K562 (cell line): ENCODE measurements at regions of chr1 and their contacts with region 1.

Region 1: DNA sequence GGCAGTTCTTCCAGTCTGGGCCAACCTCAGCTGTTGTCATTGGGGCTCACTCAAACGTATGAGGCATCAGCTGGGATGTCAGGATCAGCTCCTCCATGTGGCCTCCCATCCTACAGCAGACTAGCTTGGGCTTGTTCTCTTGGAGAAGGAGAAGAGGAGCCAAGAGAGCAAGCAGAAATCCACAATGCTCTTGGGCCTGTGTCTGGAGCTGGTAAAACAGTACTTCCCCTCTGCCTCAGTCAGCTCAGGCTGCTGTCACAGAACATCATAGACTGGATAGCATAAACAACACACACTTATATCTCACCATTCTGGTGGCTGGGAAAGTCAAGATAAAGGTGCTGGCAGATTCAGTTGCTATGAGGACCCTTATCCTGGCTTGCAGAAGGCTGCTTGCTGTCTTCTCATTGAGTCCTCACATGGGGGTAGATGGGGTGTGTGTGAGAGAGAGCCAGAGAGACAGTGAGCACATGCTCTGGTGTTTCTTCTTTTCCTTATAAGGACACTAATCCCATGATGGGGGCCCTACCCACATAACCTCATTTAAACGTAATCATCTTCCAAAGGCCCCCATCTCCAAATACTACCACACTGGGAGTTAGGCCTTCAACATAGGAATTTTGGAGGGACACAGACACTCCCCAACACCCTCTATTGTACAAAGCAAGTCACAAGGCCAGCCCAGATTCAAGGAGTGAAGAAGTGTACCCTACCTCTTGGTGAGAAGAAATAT is 16.3 kb upstream of the DNAJC6 start:
- DNase-seq: peak; percentile 68 to 98 (median 80)
- ATAC-seq: peak; percentile 95
- H3K4me3 ChIP-seq: no peak overlapping the region
- H3K27ac ChIP-seq: peak overlapping the region; percentile 96
- H3K4me1 ChIP-seq: peaks cover 28 to 52% of the 10 kb centered on the region in 2 experiments
- H3K27me3 ChIP-seq: no peaks in the 10 kb centered on the region
- CTCF ChIP-seq: no peak
- EP300 ChIP-seq: peak; percentile 100
- POLR2A ChIP-seq: peak; percentile 61; the same call in 1 of the 2 replicates
- RAD21 ChIP-seq: peak in 1 of 2 experiments; percentile 43; a peak in 3 of 4 replicates

Region 2: GRCh38 chr1:65230731-65231481 is 62.1 kb before region 1 on chr1:
- CTCF ChIA-PET with region 1: interaction called, 5 read pairs
- POLR2A ChIA-PET with region 1: interaction called, 3 read pairs
- in situ Hi-C with region 1: no loop called
- intact Hi-C with region 1: loop called (anchors 1 kb)
- DNase-seq: peak; percentile 34 to 88 (median 46)
- ATAC-seq: peak; percentile 61
- H3K4me3 ChIP-seq: no peak overlapping the region
- H3K27ac ChIP-seq: peak overlapping the region; percentile 86
- H3K4me1 ChIP-seq: peaks cover 40 to 66% of the 10 kb centered on the region in 2 experiments
- H3K27me3 ChIP-seq: no peaks in the 10 kb centered on the region
- CTCF ChIP-seq: peak in 2 of 3 experiments; percentile 18 to 22; a peak in 1 of 6 replicates
- EP300 ChIP-seq: peak; percentile 98
- POLR2A ChIP-seq: no peak
- RAD21 ChIP-seq: peak; percentile 5; a peak in 1 of 4 replicates

Region 3: DNA sequence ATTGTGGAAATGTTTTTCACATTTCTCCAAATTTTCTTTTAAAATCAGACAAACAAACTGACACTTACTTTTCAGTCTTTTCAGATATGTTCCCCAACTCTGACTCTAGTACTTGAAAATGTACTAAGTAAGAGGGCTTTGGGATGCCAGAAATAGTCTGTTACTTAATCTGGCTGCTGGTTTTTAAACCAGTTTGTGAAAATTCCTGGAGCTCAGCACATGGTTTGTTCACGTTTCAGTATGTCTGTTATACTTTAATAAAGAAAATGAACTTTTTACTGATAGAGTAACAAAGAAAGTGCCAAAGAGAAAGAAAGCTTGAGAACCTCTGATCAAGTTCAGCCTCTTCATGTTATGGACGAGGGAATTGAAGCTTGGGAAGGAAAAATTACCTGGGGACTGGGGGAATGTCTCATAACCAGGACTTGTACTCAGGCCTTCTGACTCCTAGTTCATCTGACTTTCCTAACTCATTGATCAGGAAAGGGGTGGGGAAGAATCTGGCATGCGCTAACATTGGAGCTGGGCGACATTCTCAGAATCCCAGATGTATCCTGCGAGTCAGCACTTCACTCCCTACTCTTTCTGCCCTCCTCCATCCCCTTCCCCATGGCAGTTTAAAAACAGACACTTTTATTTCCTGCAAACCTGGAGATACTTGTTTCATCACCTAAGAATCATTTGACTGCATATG is 14.5 kb before region 1 on chr1:
- CTCF ChIA-PET with region 1: no interaction called
- POLR2A ChIA-PET with region 1: interaction called, 8 read pairs
- in situ Hi-C with region 1: no loop called
- intact Hi-C with region 1: loop called (anchors 1 kb)
- DNase-seq: no peak
- ATAC-seq: no peak
- H3K4me3 ChIP-seq: no peak overlapping the region
- H3K27ac ChIP-seq: peak overlapping the region; percentile 62
- H3K4me1 ChIP-seq: peaks cover 15 to 53% of the 10 kb centered on the region in 2 experiments
- H3K27me3 ChIP-seq: no peaks in the 10 kb centered on the region
- CTCF ChIP-seq: no peak
- EP300 ChIP-seq: no peak
- POLR2A ChIP-seq: no peak
- RAD21 ChIP-seq: no peak

Region 4: DNA sequence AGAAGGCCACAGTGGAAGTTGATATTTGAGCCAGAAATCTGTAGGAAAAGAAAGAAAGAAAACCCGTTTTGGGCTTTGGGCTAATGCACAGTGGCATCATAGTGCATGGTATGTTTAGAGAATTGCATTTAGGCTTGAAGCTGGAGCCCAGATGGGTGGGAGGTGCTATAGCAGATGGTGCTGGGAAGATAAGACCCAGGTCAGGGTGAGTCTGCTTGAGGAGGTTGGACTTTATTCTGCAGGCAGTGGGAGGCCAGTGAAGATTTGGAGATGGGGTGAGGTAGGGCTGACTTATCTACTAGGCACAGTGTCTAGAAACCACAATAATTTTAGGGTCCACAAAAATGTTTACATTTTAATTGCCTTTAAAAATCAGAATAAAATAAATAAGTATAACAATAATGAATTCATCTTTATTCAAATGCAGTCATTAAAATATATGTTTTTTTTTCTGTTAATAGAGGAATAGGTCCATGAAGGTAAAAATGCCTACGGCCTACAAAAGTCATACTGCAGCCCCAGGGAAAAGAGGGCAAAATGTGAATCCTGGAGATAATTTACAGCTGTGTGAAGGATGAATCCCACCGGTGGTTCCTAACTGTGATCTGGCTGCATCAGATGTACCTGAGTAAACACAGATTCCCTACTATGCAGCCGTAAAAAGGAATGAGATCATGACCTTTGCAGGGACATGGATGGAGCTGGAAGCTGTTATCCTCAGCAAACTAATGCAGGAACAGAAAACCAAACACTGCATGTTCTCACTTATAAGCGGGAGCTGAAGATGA is 25.0 kb after region 1 on chr1:
- CTCF ChIA-PET with region 1: no interaction called
- POLR2A ChIA-PET with region 1: interaction called, 4 read pairs
- in situ Hi-C with region 1: no loop called
- intact Hi-C with region 1: loop called (anchors 2 kb)
- DNase-seq: peak; percentile 91 to 96 (median 94)
- ATAC-seq: peak; percentile 94
- H3K4me3 ChIP-seq: no peak overlapping the region
- H3K27ac ChIP-seq: peak overlapping the region; percentile 62
- H3K4me1 ChIP-seq: peaks cover 25 to 54% of the 10 kb centered on the region in 2 experiments
- H3K27me3 ChIP-seq: no peaks in the 10 kb centered on the region
- CTCF ChIP-seq: no peak
- EP300 ChIP-seq: peak; percentile 94
- POLR2A ChIP-seq: no peak
- RAD21 ChIP-seq: peak in 1 of 2 experiments; percentile 26; a peak in 2 of 4 replicates

Region 5: DNA sequence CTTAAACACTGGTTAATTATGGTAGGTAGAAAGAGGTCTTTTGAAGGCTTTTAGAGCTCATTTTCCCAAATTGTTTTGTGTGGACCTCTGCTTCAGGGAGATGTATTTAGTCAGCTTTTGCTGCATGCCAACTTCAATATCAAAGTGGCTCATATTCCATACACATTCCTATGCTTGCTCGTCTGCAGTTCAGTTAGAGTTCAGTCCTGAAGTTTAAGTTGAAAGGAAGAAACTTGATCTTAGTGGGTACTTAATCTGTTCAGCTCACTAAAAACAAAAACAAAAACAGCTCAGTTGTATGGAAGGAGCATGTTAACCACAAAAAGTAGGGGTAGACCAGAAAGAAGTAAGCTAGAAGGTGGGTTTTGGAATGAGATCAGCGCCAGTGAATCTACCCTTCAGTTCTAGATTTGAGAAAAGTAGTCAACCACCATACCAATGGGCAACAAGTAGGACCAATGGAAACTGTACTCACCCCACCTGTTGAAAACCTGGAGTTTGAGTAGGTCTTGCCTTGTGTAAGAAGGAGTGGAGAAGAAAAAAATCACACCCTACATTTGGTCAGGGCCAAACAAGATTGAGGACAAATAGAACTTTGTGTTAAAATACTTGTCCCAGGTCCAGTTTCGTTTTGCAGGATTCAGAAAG is 185.5 kb after region 1 on chr1:
- CTCF ChIA-PET with region 1: no interaction called
- POLR2A ChIA-PET with region 1: no interaction called
- in situ Hi-C with region 1: no loop called
- intact Hi-C with region 1: loop called (anchors 2 kb)
- DNase-seq: no peak
- ATAC-seq: 0 out of 3 replicates have a peak, but pooled peaks have one; percentile 2
- H3K4me3 ChIP-seq: peak overlapping the region; percentile 57
- H3K27ac ChIP-seq: peak overlapping the region; percentile 77
- H3K4me1 ChIP-seq: peaks cover 7 to 21% of the 10 kb centered on the region in 2 experiments; a peak in 3 of 5 replicates
- H3K27me3 ChIP-seq: no peaks in the 10 kb centered on the region
- CTCF ChIP-seq: no peak
- EP300 ChIP-seq: no peak
- POLR2A ChIP-seq: 0 out of 2 replicates have a peak, but pooled peaks have one; percentile 23
- RAD21 ChIP-seq: no peak

Region 6: DNA sequence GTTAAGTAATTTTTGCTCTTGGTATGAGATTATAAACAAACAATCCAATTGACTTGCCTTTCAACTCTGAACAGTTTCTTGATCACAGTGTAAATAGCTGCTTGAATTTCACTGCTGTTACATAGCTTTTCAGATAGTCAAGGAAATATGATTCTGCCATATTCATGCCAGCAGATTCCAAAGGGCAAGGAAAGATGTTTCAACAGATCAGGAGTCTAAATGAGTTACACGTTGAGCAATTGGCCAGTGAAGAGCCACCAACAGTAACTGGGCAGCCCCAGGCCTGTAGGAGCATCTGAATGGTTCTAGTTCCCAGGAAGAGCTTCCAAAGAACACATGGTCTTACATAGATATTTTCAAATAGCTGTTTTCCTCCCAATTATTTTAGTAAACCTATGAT is 221.1 kb after region 1 on chr1:
- CTCF ChIA-PET with region 1: no interaction called
- POLR2A ChIA-PET with region 1: no interaction called
- in situ Hi-C with region 1: no loop called
- intact Hi-C with region 1: no loop called
- DNase-seq: no peak
- ATAC-seq: no peak
- H3K4me3 ChIP-seq: no peak overlapping the region
- H3K27ac ChIP-seq: no peak overlapping the region
- H3K4me1 ChIP-seq: peaks cover 0 to 29% of the 10 kb centered on the region in 2 experiments; a peak in 2 of 5 replicates
- H3K27me3 ChIP-seq: no peaks in the 10 kb centered on the region
- CTCF ChIP-seq: no peak
- EP300 ChIP-seq: no peak
- POLR2A ChIP-seq: no peak
- RAD21 ChIP-seq: no peak